Sigmoid colon (tissue), 7 donors: ENCODE measurements at regions of chr1 and their contacts with region 1.

Region 1: DNA sequence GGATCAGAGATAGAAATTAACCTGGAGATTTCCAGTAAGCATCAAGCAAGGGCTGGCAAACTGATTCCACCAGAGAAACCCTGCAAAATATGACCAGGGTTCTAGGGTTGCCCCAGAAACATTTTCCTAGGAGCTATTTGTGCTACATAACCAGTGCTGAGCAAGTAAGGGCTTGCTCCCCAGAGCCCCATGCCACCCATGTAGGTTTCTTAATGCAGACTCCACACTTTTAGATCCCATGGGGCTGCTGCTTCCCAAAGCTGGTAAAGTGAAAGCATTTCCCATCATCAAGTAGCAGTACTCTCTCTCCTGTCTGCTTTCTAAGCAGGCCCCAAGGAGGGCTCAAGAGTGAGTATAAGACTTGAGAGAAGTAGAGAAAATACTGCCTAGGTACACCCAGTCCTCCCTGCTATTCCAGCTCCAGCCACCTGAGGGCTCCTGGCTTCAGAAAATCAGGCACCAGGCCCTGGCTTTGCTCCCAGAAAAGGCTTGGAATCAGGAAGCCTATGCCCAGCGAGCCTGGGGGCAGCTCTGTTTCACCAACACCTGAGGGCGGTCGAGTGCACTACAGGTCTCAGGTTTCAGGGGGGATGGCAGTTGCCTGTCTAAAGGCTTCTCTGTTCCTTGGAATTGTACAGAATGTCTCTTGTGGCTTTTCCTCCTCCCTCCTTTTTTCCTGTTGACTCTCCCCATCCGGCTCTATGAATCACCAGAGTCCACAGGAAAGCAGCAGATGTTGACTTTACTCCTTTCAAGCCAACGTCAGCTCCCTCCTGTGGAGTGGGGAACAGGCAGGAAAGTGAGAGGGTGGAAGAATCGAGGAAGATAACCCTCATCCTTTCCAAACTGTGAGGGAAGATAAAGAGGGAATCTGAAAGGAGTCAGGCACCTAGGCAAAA is 6.2 kb upstream of the ANKRD35 start:
- DNase-seq: peak; percentile 98
- H3K4me3 ChIP-seq: peak overlapping the region in 2 of 4 donors; percentile 14 to 24
- H3K27ac ChIP-seq: peak overlapping the region; percentile 78 to 86 (median 78)
- H3K4me1 ChIP-seq: peaks cover 0 to 21% (median 18%) of the 10 kb centered on the region in 4 donors
- H3K27me3 ChIP-seq: no peaks in the 10 kb centered on the region
- CTCF ChIP-seq: peak; percentile 93 to 98 (median 96)
- EP300 ChIP-seq: peak in 1 of 4 donors; percentile 31
- POLR2A ChIP-seq: no peak

Region 2: GRCh38 chr1:145706086-145706680 is 185.7 kb before region 1 on chr1:
- intact Hi-C with region 1: no loop called
- DNase-seq: no peak
- H3K4me3 ChIP-seq: no peak overlapping the region
- H3K27ac ChIP-seq: no peak overlapping the region
- H3K4me1 ChIP-seq: peaks cover 0 to 3% (median 0%) of the 10 kb centered on the region in 4 donors
- H3K27me3 ChIP-seq: no peaks in the 10 kb centered on the region
- CTCF ChIP-seq: no peak
- EP300 ChIP-seq: no peak
- POLR2A ChIP-seq: no peak

Region 3: GRCh38 chr1:145871994-145872924 is 19.6 kb before region 1 on chr1:
- intact Hi-C with region 1: loop called (anchors 2 kb)
- DNase-seq: peak; percentile 89
- H3K4me3 ChIP-seq: peak overlapping the region; percentile 33 to 57 (median 55)
- H3K27ac ChIP-seq: peak overlapping the region; percentile 87 to 89 (median 88)
- H3K4me1 ChIP-seq: peaks cover 0 to 31% (median 22%) of the 10 kb centered on the region in 4 donors
- H3K27me3 ChIP-seq: no peaks in the 10 kb centered on the region
- CTCF ChIP-seq: no peak
- EP300 ChIP-seq: no peak
- POLR2A ChIP-seq: peak in 1 of 2 donors; percentile 20

Region 4: DNA sequence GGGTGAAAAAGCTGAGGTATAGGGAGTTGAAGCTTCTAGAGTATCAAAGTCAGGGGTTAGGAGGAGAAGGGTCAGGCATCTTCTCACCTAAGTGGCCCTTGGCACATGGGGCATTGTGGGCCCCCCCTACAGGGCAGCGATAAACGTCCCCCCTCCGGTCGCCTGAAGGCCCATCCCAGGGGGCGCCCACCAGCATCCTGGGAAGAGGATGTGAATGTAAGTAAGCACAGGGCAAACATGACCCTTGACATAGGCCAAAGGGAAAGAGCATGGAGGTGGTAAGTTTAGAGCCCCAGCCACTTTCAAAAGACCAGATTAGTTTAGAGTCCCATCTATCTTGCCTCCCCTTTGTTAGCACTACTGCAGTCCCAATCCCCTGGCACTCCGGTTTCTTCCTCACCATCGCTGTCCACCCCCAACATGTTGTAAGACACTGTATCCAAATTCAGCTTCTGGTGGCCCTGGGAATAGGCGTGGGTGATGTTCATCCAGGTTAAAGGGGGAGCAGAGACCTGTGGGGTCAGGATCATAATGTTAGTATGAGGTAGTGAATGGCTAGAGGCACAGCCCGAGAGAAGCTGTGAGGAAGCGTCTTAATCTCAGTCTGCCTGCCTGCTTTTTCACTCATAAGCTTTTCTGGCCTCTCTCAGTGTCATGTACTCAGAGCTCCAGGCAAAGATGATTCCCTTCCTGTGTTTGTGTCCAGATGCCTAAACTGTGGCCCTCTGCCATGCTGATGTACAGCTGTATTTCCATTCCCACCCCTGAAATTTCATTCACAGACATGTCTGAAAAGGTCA is 15.3 kb after region 1 on chr1:
- intact Hi-C with region 1: loop called (anchors 1 kb)
- DNase-seq: no peak
- H3K4me3 ChIP-seq: no peak overlapping the region
- H3K27ac ChIP-seq: no peak overlapping the region
- H3K4me1 ChIP-seq: peaks cover 0 to 9% (median 4%) of the 10 kb centered on the region in 4 donors
- H3K27me3 ChIP-seq: no peaks in the 10 kb centered on the region
- CTCF ChIP-seq: no peak
- EP300 ChIP-seq: no peak
- POLR2A ChIP-seq: no peak